Breast epithelium (tissue), 4 donors: ENCODE measurements at regions of chr4 and their contacts with region 1.

Region 1: GRCh38 chr4:2324891-2325290 is 63.0 kb upstream of the MXD4 start:
- DNase-seq: no peak
- H3K4me3 ChIP-seq: no peak overlapping the region
- H3K27ac ChIP-seq: no peak overlapping the region
- H3K4me1 ChIP-seq: no peaks in the 10 kb centered on the region
- H3K27me3 ChIP-seq: no peaks in the 10 kb centered on the region
- CTCF ChIP-seq: no peak
- POLR2A ChIP-seq: no peak

Region 2: DNA sequence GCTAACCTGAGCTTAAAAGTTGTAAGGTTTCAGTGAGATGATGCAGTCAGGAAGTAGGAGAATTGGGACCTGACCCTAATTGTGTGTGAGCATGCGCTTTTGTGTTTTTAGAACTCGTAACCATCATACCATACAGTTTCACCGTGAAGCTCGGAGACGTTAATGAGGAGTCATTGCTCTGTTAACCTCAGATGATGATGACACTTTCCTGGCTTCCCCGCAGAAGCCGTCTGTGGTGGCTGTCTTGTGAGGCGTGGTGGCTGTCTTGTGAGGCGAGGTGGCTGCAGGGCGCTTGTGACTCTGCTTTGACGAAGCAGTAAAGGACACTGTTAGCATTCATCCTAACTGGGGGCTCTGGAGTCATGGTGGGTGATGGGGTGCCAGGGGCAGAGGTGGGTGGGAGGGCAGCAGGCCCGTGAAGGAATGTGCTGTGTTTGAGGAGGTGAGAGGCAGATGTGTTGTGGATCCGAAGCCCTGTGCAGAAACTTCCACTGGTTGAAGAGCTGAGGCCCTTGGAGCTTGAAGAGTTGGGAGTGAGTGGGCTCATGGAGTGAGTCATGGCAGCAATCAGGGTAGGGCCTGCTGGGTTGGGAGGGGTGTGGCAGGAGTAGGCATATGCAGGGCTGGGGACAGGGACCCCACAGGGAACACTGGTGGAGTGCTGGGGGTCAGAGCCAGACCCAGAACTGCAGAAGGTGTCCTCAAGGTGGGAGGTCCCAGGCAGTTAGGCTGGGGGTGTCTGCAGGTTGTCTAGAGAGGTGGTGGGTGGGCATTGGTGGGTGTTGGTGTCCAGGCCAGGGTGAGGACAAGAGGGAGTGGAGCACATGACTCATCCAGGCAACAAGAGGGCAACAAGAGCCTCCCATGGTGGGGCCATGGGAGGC is 396.3 kb before region 1 on chr4:
- intact Hi-C with region 1: loop called (anchors 5 kb)
- DNase-seq: no peak
- H3K4me3 ChIP-seq: no peak overlapping the region
- H3K27ac ChIP-seq: no peak overlapping the region
- H3K4me1 ChIP-seq: no peaks in the 10 kb centered on the region
- H3K27me3 ChIP-seq: no peaks in the 10 kb centered on the region
- CTCF ChIP-seq: no peak
- POLR2A ChIP-seq: no peak